ENCODE measurements at regions of chr22 and their contacts with region 1.

Region 1: DNA sequence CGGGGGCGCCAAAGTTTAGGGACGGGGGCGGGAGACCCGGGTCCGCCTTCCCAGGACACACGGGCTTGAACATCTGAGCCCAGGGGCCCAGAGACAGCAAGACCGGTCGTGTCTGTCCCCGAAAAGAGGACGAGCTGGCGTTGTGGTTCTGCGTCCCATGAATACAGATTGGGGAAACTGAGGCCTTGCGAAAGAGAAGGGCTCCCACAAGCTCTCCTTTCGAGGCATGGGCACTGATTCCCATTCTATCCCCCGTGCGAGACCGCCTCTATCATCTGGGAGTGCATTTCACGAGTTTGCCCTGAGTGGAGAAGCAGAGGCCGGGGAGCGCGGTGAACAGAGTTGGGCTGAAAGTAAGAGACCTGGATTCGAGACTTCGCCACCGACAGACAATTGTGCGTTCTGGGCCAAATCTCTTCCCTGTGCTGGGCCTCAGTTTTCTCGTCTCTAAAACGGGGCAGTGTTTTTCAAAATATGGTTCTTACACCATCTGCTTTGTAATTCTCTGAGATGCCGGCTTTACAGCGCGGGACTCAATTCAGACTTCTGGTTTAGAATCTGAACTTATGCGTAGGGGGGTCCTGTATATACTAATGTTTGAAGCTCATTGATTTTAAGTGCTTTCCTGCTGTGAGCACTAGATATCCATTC is 471 bp downstream of the RNF185 start:
- DNase-seq: no peak
- ATAC-seq: peak; percentile 54
- H3K4me3 Mint-ChIP-seq: peak overlapping the region; percentile 92
- H3K27ac Mint-ChIP-seq: peak overlapping the region; percentile 95
- H3K4me1 Mint-ChIP-seq: peaks cover 10% of the 10 kb centered on the region
- H3K27me3 Mint-ChIP-seq: peaks cover 43% of the 10 kb centered on the region
- CTCF ChIP-seq: no peak

Region 2: DNA sequence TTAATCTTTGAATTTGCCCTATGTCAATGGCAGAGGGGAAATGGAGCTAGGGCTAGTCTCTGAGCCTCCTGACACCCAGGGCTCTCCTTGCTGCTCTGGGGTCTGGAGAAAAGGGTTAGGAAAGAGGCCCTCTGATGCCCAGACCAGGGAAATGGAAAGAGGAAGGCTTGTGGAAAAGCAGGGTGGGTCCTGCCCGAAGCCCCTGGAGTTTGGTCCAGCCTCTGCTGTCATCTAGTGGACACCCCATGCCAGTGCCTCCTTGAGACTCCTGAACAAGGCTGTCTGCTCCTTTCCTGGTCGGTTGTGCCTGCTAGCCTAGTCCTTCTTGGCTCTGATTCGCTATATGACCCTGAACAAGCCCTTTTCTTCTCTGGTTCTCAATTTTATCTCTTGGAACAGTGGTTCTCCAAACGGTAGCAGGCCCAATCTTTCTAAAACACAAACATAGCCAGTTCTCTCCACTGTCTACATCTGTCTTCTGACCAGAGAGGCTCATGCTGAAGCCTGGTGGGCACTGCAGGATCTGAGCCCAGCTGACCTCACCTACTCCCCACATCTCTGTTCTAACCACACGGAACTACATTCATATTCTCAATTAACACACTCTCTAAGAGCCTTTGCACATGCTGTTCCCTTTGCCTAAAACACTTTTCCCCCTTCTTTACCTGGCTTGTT is 11.4 kb before region 1 on chr22:
- CTCF ChIA-PET with region 1: interaction called, 13 read pairs
- POLR2A ChIA-PET with region 1: no interaction called
- DNase-seq: peak; percentile 84
- ATAC-seq: peak; percentile 99
- H3K4me3 Mint-ChIP-seq: no peak overlapping the region
- H3K27ac Mint-ChIP-seq: no peak overlapping the region
- H3K4me1 Mint-ChIP-seq: no peaks in the 10 kb centered on the region
- H3K27me3 Mint-ChIP-seq: peaks cover 31% of the 10 kb centered on the region
- CTCF ChIP-seq: peak; percentile 79